Activated T-helper 2 cell treated with anti-CD3 and anti-CD28 coated beads, Interferon-gamma antibody, Interleukin-2, Interleukin-4, amounts not matched to agents 10 μg/mL and 5 μg/mL and 100 μg/mL, durations not matched to agents 14 hours and 24 hours and 36 hours (primary cell): ENCODE measurements at regions of chr2 and their contacts with region 1.

Region 1: GRCh38 chr2:9799665-9800632 is 43.3 kb upstream of the TAF1B start:
- DNase-seq: peak; percentile 81
- H3K4me3 Mint-ChIP-seq: peak overlapping the region; percentile 72
- H3K27ac Mint-ChIP-seq: peak overlapping the region; percentile 71
- H3K4me1 Mint-ChIP-seq: peaks cover 34% of the 10 kb centered on the region
- H3K27me3 Mint-ChIP-seq: no peaks in the 10 kb centered on the region

Region 2: DNA sequence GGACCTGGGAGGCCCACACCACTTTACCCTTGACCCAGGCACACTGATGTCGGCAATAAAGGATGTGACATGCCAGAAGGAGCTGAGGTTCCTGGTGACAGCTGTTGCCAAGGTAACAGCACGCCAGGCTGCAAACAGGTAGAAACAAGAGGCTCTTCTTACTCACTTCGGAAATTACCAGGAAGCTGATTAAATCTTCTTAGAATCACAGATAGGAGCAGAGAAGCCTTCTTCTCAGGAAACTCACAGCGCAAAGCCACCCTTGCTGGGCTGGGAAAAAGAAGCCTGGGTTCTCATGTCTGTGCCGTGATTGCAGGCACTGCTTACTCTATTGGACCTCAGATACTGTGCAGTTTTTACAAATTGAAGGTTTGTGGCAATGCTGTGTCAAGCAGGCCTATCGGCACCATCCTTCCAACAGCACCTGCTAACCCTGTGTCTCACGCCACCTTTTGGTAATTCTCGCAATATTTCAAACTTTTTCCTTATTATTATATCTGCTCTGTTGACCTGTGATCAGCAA is 17.7 kb before region 1 on chr2:
- intact Hi-C with region 1: loop called (anchors 2 kb)
- DNase-seq: peak; percentile 82
- H3K4me3 Mint-ChIP-seq: peak overlapping the region; percentile 66
- H3K27ac Mint-ChIP-seq: peak overlapping the region; percentile 99
- H3K4me1 Mint-ChIP-seq: peaks cover 67% of the 10 kb centered on the region
- H3K27me3 Mint-ChIP-seq: no peaks in the 10 kb centered on the region

Region 3: GRCh38 chr2:9813312-9814133 is 13.6 kb after region 1 on chr2:
- intact Hi-C with region 1: no loop called
- DNase-seq: peak; percentile 63
- H3K4me3 Mint-ChIP-seq: no peak overlapping the region
- H3K27ac Mint-ChIP-seq: no peak overlapping the region
- H3K4me1 Mint-ChIP-seq: peaks cover 12% of the 10 kb centered on the region
- H3K27me3 Mint-ChIP-seq: peaks cover 19% of the 10 kb centered on the region